Sigmoid colon (tissue), 7 donors: ENCODE measurements at regions of chr1 and their contacts with region 1.

Region 1: GRCh38 chr1:221035680-221036153 is 156.5 kb downstream of the HLX start:
- DNase-seq: no peak
- H3K4me3 ChIP-seq: no peak overlapping the region
- H3K27ac ChIP-seq: peak overlapping the region in 2 of 4 donors; percentile 33 to 38
- H3K4me1 ChIP-seq: peaks cover 0 to 47% (median 39%) of the 10 kb centered on the region in 4 donors
- H3K27me3 ChIP-seq: no peaks in the 10 kb centered on the region
- CTCF ChIP-seq: no peak
- EP300 ChIP-seq: no peak
- POLR2A ChIP-seq: no peak

Region 2: GRCh38 chr1:220818421-220819173 is 217.1 kb before region 1 on chr1:
- intact Hi-C with region 1: loop called (anchors 5 kb)
- DNase-seq: peak; percentile 95
- H3K4me3 ChIP-seq: no peak overlapping the region
- H3K27ac ChIP-seq: peak overlapping the region; percentile 73 to 88 (median 84)
- H3K4me1 ChIP-seq: peaks cover 0 to 70% (median 69%) of the 10 kb centered on the region in 4 donors
- H3K27me3 ChIP-seq: no peaks in the 10 kb centered on the region
- CTCF ChIP-seq: no peak
- EP300 ChIP-seq: peak in 3 of 4 donors; percentile 90 to 95 (median 92)
- POLR2A ChIP-seq: no peak

Region 3: GRCh38 chr1:220887520-220888416 is 147.9 kb before region 1 on chr1:
- intact Hi-C with region 1: loop called (anchors 2 kb)
- DNase-seq: no peak
- H3K4me3 ChIP-seq: peak overlapping the region; percentile 8 to 44 (median 35)
- H3K27ac ChIP-seq: peak overlapping the region in 3 of 4 donors; percentile 95 to 100 (median 99)
- H3K4me1 ChIP-seq: peaks cover 0 to 61% (median 56%) of the 10 kb centered on the region in 4 donors
- H3K27me3 ChIP-seq: peaks cover 0 to 5% (median 0%) of the 10 kb centered on the region in 3 donors
- CTCF ChIP-seq: no peak
- EP300 ChIP-seq: no peak
- POLR2A ChIP-seq: no peak

Region 4: GRCh38 chr1:221203224-221204054 is 167.7 kb after region 1 on chr1:
- intact Hi-C with region 1: loop called (anchors 5 kb)
- DNase-seq: peak; percentile 88
- H3K4me3 ChIP-seq: no peak overlapping the region
- H3K27ac ChIP-seq: peak overlapping the region; percentile 54 to 70 (median 62)
- H3K4me1 ChIP-seq: peaks cover 0 to 30% (median 14%) of the 10 kb centered on the region in 4 donors
- H3K27me3 ChIP-seq: no peaks in the 10 kb centered on the region
- CTCF ChIP-seq: peak; percentile 46 to 88 (median 72)
- EP300 ChIP-seq: no peak
- POLR2A ChIP-seq: no peak

Region 5: DNA sequence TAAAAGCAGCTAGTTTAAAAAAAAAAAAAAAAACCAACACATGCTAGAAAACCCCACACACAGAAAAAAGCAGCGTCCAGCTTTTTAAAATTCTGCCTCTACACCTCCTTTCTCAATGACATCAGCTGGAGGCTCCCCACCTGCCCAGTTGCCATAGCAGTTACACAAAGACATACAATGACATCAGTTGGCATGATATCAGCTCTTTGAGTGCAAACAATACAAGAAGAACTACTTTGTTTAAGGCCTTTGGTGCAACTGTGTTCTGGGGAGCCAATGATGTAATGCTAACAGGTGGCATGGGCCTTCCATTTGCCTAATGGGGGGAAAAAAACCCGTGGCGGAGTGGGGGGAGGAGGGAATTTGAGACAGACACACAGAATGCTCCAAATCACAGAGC is 673.3 kb after region 1 on chr1:
- intact Hi-C with region 1: loop called (anchors 10 kb)
- DNase-seq: peak; percentile 85
- H3K4me3 ChIP-seq: no peak overlapping the region
- H3K27ac ChIP-seq: peak overlapping the region; percentile 74 to 89 (median 81)
- H3K4me1 ChIP-seq: peaks cover 0 to 98% (median 85%) of the 10 kb centered on the region in 4 donors
- H3K27me3 ChIP-seq: no peaks in the 10 kb centered on the region
- CTCF ChIP-seq: no peak
- EP300 ChIP-seq: peak in 3 of 4 donors; percentile 53 to 93 (median 89)
- POLR2A ChIP-seq: no peak